ENCODE measurements at regions of chr15 and their contacts with region 1.

Region 1: GRCh38 chr15:77107531-77108355 is 36.8 kb upstream of the TSPAN3 start:
- DNase-seq: peak; percentile 60
- ATAC-seq: peak; percentile 51
- H3K4me3 ChIP-seq: no peak overlapping the region
- H3K4me3 Mint-ChIP-seq: no peak overlapping the region
- H3K27ac ChIP-seq: no peak overlapping the region
- H3K27ac Mint-ChIP-seq: no peak overlapping the region
- H3K4me1 ChIP-seq: peaks cover 3 to 14% of the 10 kb centered on the region in 2 donors
- H3K4me1 Mint-ChIP-seq: peaks cover 11% of the 10 kb centered on the region
- H3K27me3 ChIP-seq: no peaks in the 10 kb centered on the region
- H3K27me3 Mint-ChIP-seq: no peaks in the 10 kb centered on the region
- CTCF ChIP-seq: peak; percentile 64

Region 2: DNA sequence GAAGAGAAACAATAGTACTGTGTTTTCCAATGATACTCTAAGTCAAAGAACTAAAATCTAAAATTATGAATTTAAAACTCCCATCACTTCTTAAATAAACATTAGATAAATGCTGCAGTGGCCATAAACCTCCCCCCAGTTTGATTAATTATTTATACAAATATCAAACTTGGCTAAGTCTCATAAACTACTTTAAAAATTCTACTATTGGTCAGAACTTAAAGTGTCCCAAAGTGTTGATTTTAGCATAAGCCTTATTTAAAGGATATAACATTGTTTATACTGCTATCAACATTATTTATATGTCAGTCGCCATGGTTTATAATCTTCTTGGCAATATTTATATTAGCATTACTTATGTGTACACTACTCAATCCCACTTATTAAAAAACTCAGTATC is 335.0 kb before region 1 on chr15:
- CTCF ChIA-PET with region 1: no interaction called
- POLR2A ChIA-PET with region 1: no interaction called
- intact Hi-C with region 1: no loop called
- DNase-seq: no peak
- ATAC-seq: no peak
- H3K4me3 ChIP-seq: no peak overlapping the region
- H3K4me3 Mint-ChIP-seq: no peak overlapping the region
- H3K27ac ChIP-seq: no peak overlapping the region
- H3K27ac Mint-ChIP-seq: no peak overlapping the region
- H3K4me1 ChIP-seq: no peaks in the 10 kb centered on the region
- H3K4me1 Mint-ChIP-seq: no peaks in the 10 kb centered on the region
- H3K27me3 ChIP-seq: no peaks in the 10 kb centered on the region
- H3K27me3 Mint-ChIP-seq: no peaks in the 10 kb centered on the region
- CTCF ChIP-seq: no peak

Region 3: GRCh38 chr15:77094397-77095030 is 13.2 kb before region 1 on chr15:
- CTCF ChIA-PET with region 1: interaction called, 11 read pairs
- POLR2A ChIA-PET with region 1: no interaction called
- intact Hi-C with region 1: no loop called
- DNase-seq: no peak
- ATAC-seq: no peak
- H3K4me3 ChIP-seq: no peak overlapping the region
- H3K4me3 Mint-ChIP-seq: no peak overlapping the region
- H3K27ac ChIP-seq: no peak overlapping the region
- H3K27ac Mint-ChIP-seq: no peak overlapping the region
- H3K4me1 ChIP-seq: peaks cover 1 to 21% of the 10 kb centered on the region in 2 donors
- H3K4me1 Mint-ChIP-seq: peaks cover 1% of the 10 kb centered on the region
- H3K27me3 ChIP-seq: no peaks in the 10 kb centered on the region
- H3K27me3 Mint-ChIP-seq: no peaks in the 10 kb centered on the region
- CTCF ChIP-seq: peak; percentile 23

Measured in B cell (primary cell).